PC-9 (cell line): ENCODE measurements at regions of chr2 and their contacts with region 1.

Region 1: DNA sequence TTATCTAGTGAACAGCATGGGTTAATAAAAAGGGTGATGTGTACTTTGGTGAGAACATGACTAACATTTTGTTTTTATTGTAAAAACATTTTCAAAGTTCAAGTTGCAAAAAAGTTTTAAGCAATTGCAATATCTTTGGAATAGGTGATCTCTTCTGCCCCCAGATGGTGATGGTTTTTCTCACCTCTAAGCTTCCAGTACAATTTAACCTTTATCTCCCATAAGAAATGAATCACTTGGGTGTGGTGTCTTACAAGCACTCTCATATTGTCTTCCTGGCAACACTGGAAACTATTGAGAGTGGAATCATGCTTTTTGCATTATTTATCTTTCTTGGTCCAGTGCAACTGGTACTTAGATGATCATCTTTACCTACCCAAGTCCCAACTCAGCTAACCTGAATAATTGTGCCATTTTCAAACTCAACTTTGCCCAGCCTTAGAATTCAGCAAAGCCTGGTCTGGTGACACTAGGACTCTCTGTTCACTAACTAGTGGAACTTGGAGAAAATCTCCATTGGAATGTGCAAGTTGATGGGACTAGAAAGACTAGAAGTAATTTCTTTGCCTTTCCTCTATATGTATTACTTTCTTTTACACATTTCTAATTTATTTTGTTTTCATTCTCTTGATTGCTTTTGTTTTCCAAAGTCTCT is 964.7 kb upstream of the ZEB2 start:
- DNase-seq: peak; percentile 27 to 59
- H3K4me3 ChIP-seq: no peak overlapping the region
- H3K27ac ChIP-seq: no peak overlapping the region; the same call in 1 of the 2 replicates
- H3K4me1 ChIP-seq: 0 out of 2 replicates have a peak, but pooled peaks cover 5% of the 10 kb centered on the region
- H3K27me3 ChIP-seq: no peaks in the 10 kb centered on the region
- CTCF ChIP-seq: 0 out of 2 replicates have a peak, but pooled peaks have one; percentile 26

Region 2: GRCh38 chr2:145692971-145693478 is 208.5 kb after region 1 on chr2:
- CTCF ChIA-PET with region 1: no interaction called
- POLR2A ChIA-PET with region 1: no interaction called
- intact Hi-C with region 1: loop called (anchors 10 kb)
- DNase-seq: peak; percentile 69 to 91
- H3K4me3 ChIP-seq: no peak overlapping the region
- H3K27ac ChIP-seq: peak overlapping the region; percentile 98
- H3K4me1 ChIP-seq: peaks cover 22% of the 10 kb centered on the region
- H3K27me3 ChIP-seq: no peaks in the 10 kb centered on the region
- CTCF ChIP-seq: no peak